ENCODE measurements at regions of chr1 and their contacts with region 1.

Region 1: GRCh38 chr1:165858364-165858823 is 31.0 kb downstream of the UCK2 start:
- DNase-seq: no peak
- ATAC-seq: 0 out of 2 replicates have a peak, but pooled peaks have one; percentile 22
- H3K4me3 ChIP-seq: no peak overlapping the region
- H3K27ac ChIP-seq: no peak overlapping the region
- H3K4me1 ChIP-seq: peaks cover 15% of the 10 kb centered on the region
- H3K27me3 ChIP-seq: no peaks in the 10 kb centered on the region
- CTCF ChIP-seq: no peak

Region 2: GRCh38 chr1:165891111-165891860 is 32.9 kb after region 1 on chr1:
- CTCF ChIA-PET with region 1: no interaction called
- POLR2A ChIA-PET with region 1: no interaction called
- in situ Hi-C with region 1: no loop called
- intact Hi-C with region 1: loop called (anchors 1 kb)
- DNase-seq: no peak
- ATAC-seq: no peak
- H3K4me3 ChIP-seq: no peak overlapping the region
- H3K27ac ChIP-seq: no peak overlapping the region
- H3K4me1 ChIP-seq: no peaks in the 10 kb centered on the region
- H3K27me3 ChIP-seq: no peaks in the 10 kb centered on the region
- CTCF ChIP-seq: no peak

Region 3: DNA sequence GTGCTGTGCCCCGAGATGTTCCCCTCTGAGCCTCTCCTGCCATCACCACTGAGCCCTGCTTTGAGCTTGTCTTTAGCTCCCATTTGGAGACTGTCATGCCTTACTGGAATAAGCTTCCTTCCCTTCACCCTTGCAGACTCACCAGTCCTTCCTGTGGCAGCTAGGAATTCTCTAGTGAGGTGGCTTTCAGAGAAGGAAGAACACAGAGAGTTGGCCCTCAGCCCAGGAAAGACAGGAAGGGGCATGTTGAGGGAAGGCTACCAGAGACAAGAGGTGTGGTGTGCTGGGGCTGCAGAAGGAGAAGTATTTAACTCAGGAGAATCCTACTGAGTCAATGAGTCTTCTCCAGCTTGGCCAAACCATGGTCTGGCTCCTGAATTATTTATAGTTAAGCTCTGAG is 45.3 kb after region 1 on chr1:
- CTCF ChIA-PET with region 1: no interaction called
- POLR2A ChIA-PET with region 1: no interaction called
- in situ Hi-C with region 1: no loop called
- intact Hi-C with region 1: no loop called
- DNase-seq: no peak
- ATAC-seq: no peak
- H3K4me3 ChIP-seq: no peak overlapping the region
- H3K27ac ChIP-seq: no peak overlapping the region
- H3K4me1 ChIP-seq: no peaks in the 10 kb centered on the region
- H3K27me3 ChIP-seq: no peaks in the 10 kb centered on the region
- CTCF ChIP-seq: no peak

Region 4: DNA sequence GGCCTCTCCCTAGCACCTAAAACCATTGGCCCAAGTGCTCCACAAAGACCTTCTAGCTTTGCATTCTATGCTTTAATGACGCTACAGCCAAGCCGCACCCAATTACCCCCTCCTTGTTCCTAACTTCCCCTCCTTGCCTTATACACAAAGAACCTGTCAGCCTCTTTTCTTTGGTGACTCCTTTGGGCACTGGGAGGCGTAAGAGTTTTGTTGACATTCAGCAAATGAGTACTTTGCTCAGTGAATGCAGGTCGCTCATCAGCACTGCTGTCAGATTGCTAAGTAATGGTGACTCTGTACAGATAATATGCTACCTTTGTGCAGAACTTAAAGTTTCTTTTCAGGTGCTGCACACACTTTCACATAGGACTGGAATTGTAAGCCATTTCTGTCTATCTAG is 496.0 kb after region 1 on chr1:
- CTCF ChIA-PET with region 1: no interaction called
- POLR2A ChIA-PET with region 1: no interaction called
- in situ Hi-C with region 1: no loop called
- intact Hi-C with region 1: no loop called
- DNase-seq: no peak
- ATAC-seq: no peak
- H3K4me3 ChIP-seq: no peak overlapping the region
- H3K27ac ChIP-seq: no peak overlapping the region
- H3K4me1 ChIP-seq: no peaks in the 10 kb centered on the region
- H3K27me3 ChIP-seq: no peaks in the 10 kb centered on the region
- CTCF ChIP-seq: no peak